Ovary (tissue), 10 donors: ENCODE measurements at regions of chr20 and their contacts with region 1.

Region 1: GRCh38 chr20:20824924-20825584 is 112.6 kb upstream of the RALGAPA2 start:
- DNase-seq: peak; percentile 55 to 66 (median 60)
- H3K4me3 ChIP-seq: no peak overlapping the region
- H3K27ac ChIP-seq: no peak overlapping the region
- H3K4me1 ChIP-seq: no peaks in the 10 kb centered on the region
- H3K27me3 ChIP-seq: no peaks in the 10 kb centered on the region
- CTCF ChIP-seq: peak; percentile 39 to 66 (median 62)
- EP300 ChIP-seq: no peak
- POLR2A ChIP-seq: no peak

Region 2: DNA sequence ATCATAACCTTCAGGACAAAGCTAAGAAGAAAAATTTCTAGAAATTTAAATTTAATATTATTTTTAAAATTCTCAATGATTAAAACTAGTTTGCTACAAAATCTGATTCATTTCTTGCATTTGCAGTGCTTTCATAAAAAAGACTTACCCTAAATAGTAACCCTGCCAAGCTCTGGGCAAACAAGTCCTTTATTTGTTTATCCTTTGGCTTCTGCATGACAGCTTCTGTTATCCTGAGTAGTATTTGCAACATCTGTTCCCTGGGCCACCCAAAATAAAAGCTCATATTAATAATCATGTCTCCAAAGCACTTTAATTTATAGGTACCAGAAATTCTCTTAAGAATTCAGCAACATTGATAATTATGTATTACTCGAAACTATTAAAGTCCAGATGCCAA is 213.9 kb before region 1 on chr20:
- intact Hi-C with region 1: loop called in 1 of 4 experiments (anchors 10 kb)
- DNase-seq: no peak
- H3K4me3 ChIP-seq: no peak overlapping the region
- H3K27ac ChIP-seq: no peak overlapping the region
- H3K4me1 ChIP-seq: peaks cover 3% of the 10 kb centered on the region
- H3K27me3 ChIP-seq: no peaks in the 10 kb centered on the region
- CTCF ChIP-seq: no peak
- EP300 ChIP-seq: no peak
- POLR2A ChIP-seq: no peak

Region 3: DNA sequence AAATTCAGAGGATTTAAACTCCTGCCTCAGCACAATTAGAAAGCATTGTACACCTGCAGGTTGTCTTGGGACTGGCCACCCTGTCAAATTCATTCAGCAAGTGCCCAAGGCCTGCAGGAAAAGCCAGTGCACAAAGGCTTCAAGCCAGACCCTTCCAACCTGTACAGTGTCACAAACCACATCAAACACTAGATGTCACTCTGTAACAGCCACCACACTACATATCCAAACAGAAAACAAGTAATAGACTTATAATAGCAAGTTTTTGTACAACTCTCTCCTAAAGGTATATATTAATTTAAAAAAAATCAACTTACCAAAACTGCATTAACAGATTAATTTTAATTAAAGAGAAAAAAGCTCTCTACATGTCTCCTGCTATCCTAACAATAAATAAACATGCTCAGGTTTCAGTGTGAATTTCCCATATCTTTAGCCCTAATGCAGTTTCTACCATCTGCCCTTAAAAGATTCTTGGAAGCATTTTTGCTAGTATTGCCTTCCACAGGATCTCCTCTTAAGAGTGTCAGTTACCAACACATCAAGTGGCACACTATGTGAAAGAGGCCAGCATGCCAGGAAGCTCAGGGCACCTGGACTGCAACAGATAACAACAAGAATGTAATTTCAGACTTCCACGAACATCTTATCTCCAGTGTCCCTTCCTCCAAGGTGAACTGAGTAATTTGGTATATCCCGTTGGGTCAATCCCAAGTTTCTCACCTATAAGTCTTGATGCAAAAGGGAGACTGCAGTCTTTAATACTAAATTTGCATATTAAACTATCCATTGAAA is 160.1 kb before region 1 on chr20:
- intact Hi-C with region 1: loop called in 2 of 4 experiments (anchors 10 kb)
- DNase-seq: no peak
- H3K4me3 ChIP-seq: no peak overlapping the region
- H3K27ac ChIP-seq: no peak overlapping the region
- H3K4me1 ChIP-seq: peaks cover 5% of the 10 kb centered on the region
- H3K27me3 ChIP-seq: no peaks in the 10 kb centered on the region
- CTCF ChIP-seq: no peak
- EP300 ChIP-seq: no peak
- POLR2A ChIP-seq: no peak